Ovary (tissue), 10 donors: ENCODE measurements at regions of chr20 and their contacts with region 1.

Region 1: DNA sequence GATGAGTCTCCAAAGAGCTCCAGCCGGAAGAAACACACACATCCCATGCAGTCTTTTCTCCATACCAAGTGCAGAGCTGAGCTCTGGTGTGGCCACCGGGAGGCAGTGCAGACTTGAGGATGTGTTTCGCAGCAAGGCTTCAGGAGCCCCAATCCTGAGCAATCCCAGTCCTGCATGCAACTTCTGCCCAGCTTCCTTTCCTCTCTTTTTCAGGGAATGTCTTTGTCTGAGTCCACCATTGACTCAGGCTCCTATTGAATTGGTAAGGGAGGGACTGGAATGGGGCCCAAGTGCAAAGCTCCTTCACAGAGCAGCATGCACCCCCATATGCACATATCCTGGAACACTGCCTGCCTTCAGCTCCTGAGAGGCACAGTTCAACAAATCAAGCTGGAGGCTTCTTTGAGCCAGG is 50.5 kb upstream of the ASIP start:
- DNase-seq: peak; percentile 76 to 86 (median 81)
- H3K4me3 ChIP-seq: no peak overlapping the region
- H3K27ac ChIP-seq: no peak overlapping the region
- H3K4me1 ChIP-seq: no peaks in the 10 kb centered on the region
- H3K27me3 ChIP-seq: no peaks in the 10 kb centered on the region
- CTCF ChIP-seq: peak; percentile 61 to 78 (median 66)
- EP300 ChIP-seq: no peak
- POLR2A ChIP-seq: no peak

Region 2: GRCh38 chr20:34299556-34300255 is 109.0 kb after region 1 on chr20:
- intact Hi-C with region 1: loop called in 1 of 4 experiments (anchors 5 kb)
- DNase-seq: no peak
- H3K4me3 ChIP-seq: no peak overlapping the region
- H3K27ac ChIP-seq: no peak overlapping the region
- H3K4me1 ChIP-seq: peaks cover 6% of the 10 kb centered on the region
- H3K27me3 ChIP-seq: no peaks in the 10 kb centered on the region
- CTCF ChIP-seq: no peak
- EP300 ChIP-seq: no peak
- POLR2A ChIP-seq: no peak

Region 3: DNA sequence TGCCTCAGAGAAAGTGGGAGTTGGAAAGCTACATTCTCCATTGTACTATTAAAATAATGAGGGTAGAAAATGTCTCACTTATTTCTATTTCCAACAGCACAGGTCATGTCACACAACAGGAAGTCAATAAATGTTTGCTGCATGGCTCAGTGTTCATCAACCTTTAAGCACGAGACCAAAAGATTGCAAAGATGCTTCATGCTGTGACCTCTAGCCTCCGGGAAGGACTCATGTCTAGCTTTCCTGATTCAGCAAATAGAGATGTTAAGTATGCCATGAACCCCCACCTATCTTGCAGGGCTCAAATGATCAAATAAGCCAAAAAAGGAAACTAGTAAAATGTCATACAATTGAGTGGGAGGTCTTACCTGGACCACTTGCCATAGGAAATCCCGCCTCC is 577.4 kb after region 1 on chr20:
- intact Hi-C with region 1: loop called in 2 of 4 experiments (anchors 10 kb)
- DNase-seq: no peak
- H3K4me3 ChIP-seq: no peak overlapping the region
- H3K27ac ChIP-seq: no peak overlapping the region
- H3K4me1 ChIP-seq: no peaks in the 10 kb centered on the region
- H3K27me3 ChIP-seq: no peaks in the 10 kb centered on the region
- CTCF ChIP-seq: no peak
- EP300 ChIP-seq: no peak
- POLR2A ChIP-seq: no peak

Region 4: GRCh38 chr20:35215066-35215956 is 1024.6 kb after region 1 on chr20:
- intact Hi-C with region 1: no loop called
- DNase-seq: no peak
- H3K4me3 ChIP-seq: no peak overlapping the region
- H3K27ac ChIP-seq: no peak overlapping the region
- H3K4me1 ChIP-seq: no peaks in the 10 kb centered on the region
- H3K27me3 ChIP-seq: no peaks in the 10 kb centered on the region
- CTCF ChIP-seq: no peak
- EP300 ChIP-seq: no peak
- POLR2A ChIP-seq: no peak